Activated B cell treated with CpG ODN at 0.5 μM for 24 hours (primary cell): ENCODE measurements at regions of chr6 and their contacts with region 1.

Region 1: GRCh38 chr6:132490024-132490423 is 22.9 kb downstream of the STX7 start:
- DNase-seq: no peak
- ATAC-seq: peak; percentile 37
- H3K4me3 Mint-ChIP-seq: no peak overlapping the region
- H3K27ac Mint-ChIP-seq: no peak overlapping the region
- H3K4me1 Mint-ChIP-seq: peaks cover 39% of the 10 kb centered on the region
- H3K27me3 Mint-ChIP-seq: no peaks in the 10 kb centered on the region
- CTCF ChIP-seq: no peak

Region 2: DNA sequence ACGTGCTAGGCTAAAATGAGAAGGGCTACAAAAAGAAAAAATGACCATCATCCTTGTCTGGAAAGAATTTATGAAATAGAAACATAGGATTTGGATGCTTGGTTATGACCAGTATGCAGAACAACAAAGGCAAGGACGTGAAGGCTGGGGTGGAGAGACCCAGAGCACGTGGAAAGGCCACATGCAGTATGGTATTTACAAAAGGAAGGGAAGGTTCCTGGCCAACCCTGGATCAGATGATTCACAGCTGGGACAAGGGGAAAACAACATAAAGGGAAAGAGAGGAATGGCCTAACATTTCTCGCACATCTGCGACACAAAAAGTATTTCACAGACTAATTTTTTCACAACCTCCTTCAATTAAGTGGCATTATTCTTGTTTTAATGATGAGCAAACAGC is 14.7 kb after region 1 on chr6:
- CTCF ChIA-PET with region 1: interaction called, 7 read pairs
- POLR2A ChIA-PET with region 1: interaction called, 25 read pairs
- intact Hi-C with region 1: loop called (anchors 1 kb)
- DNase-seq: no peak
- ATAC-seq: no peak
- H3K4me3 Mint-ChIP-seq: peak overlapping the region; percentile 47
- H3K27ac Mint-ChIP-seq: peak overlapping the region; percentile 77
- H3K4me1 Mint-ChIP-seq: peaks cover 94% of the 10 kb centered on the region
- H3K27me3 Mint-ChIP-seq: no peaks in the 10 kb centered on the region
- CTCF ChIP-seq: no peak